Sciatic nerve (tissue), 2 donors: ENCODE measurements at regions of chr11 and their contacts with region 1.

Region 1: GRCh38 chr11:67627812-67628624 is 1.7 kb downstream of the NUDT8 start:
- DNase-seq: peak; percentile 58
- ATAC-seq: no peak

Region 2: GRCh38 chr11:67584881-67585557 is 43.0 kb before region 1 on chr11:
- intact Hi-C with region 1: loop called (anchors 1 kb)
- DNase-seq: no peak
- ATAC-seq: peak; percentile 1